GM23248 (cell line): ENCODE measurements at regions of chr17 and their contacts with region 1.

Region 1: GRCh38 chr17:66578781-66579489 is 256.0 kb upstream of the CACNG5 start:
- DNase-seq: no peak
- H3K4me3 ChIP-seq: no peak overlapping the region
- H3K27ac ChIP-seq: no peak overlapping the region
- H3K4me1 ChIP-seq: no peaks in the 10 kb centered on the region
- H3K27me3 ChIP-seq: no peaks in the 10 kb centered on the region

Region 2: GRCh38 chr17:66514227-66514806 is 64.6 kb before region 1 on chr17:
- in situ Hi-C with region 1: no loop called
- DNase-seq: peak; percentile 85
- H3K4me3 ChIP-seq: no peak overlapping the region
- H3K27ac ChIP-seq: peak overlapping the region; percentile 55
- H3K4me1 ChIP-seq: peaks cover 24% of the 10 kb centered on the region
- H3K27me3 ChIP-seq: no peaks in the 10 kb centered on the region

Region 3: GRCh38 chr17:66633317-66633965 is 54.5 kb after region 1 on chr17:
- in situ Hi-C with region 1: loop called (anchors 10 kb)
- DNase-seq: peak; percentile 66
- H3K4me3 ChIP-seq: no peak overlapping the region
- H3K27ac ChIP-seq: no peak overlapping the region
- H3K4me1 ChIP-seq: peaks cover 26% of the 10 kb centered on the region
- H3K27me3 ChIP-seq: no peaks in the 10 kb centered on the region